CD8-positive, alpha-beta T cell (primary cell): ENCODE measurements at regions of chr11 and their contacts with region 1.

Region 1: DNA sequence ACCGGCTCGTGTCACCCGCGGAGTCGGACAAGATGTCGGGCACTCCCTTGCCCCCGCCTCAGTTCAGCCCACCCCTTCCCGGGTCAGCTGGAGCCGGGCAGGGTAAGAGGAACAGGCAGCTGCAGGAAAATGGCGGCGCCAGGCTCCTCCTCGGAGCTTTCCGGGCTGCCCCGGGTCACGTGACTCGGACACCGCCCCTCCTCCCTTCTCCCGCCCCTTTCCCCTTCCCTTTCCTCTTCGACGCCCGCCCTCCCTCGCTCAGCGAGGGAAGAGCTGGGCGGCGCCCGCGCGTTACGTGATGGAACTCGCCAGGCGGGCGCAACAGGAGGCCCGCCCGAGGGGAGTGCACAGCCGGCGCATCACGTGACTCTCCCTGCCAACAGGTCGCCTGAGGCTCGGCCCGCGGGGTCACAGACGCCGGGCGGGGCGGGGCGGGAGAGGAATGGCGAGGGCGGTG is at the start of gene PICALM:
- DNase-seq: peak; percentile 91 to 99 (median 96)
- ATAC-seq: peak; percentile 91
- H3K4me3 ChIP-seq: peak within 1 kb of the TSS; percentile 94
- H3K4me3 Mint-ChIP-seq: peak within 1 kb of the TSS; percentile 100
- H3K27ac ChIP-seq: peak within 1 kb of the TSS; percentile 67 to 93
- H3K27ac Mint-ChIP-seq: peak within 1 kb of the TSS; percentile 97
- H3K4me1 ChIP-seq: peaks cover 24% of the 10 kb centered on the region
- H3K4me1 Mint-ChIP-seq: peaks cover 34% of the 10 kb centered on the region
- H3K27me3 ChIP-seq: no peaks in the 10 kb centered on the region
- H3K27me3 Mint-ChIP-seq: no peaks in the 10 kb centered on the region
- CTCF ChIP-seq: no peak
- total RNA-seq, gene PICALM: 79.8 to 80.0 TPM

Region 2: DNA sequence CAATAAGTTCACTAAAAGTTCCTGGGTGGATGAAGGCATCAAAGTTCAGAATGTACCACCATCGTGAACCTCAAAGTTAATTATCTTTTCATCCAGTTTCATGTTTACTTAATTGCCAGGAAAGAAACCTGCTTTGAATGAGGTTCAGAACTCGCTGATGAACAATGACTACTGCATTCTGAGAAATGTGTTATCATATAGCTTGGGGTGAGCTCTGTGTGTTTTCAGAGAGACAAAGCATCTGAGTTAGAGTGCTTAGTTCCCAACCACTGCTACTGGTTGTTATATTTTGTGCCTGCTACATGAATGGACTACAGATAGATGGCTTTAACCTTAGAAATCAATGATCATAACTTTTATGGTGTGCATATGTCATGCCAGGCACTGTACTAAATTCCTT is 1572.9 kb before region 1 on chr11:
- CTCF ChIA-PET with region 1: no interaction called
- POLR2A ChIA-PET with region 1: no interaction called
- intact Hi-C with region 1: no loop called
- DNase-seq: no peak
- ATAC-seq: no peak
- H3K4me3 ChIP-seq: no peak overlapping the region
- H3K4me3 Mint-ChIP-seq: no peak overlapping the region
- H3K27ac ChIP-seq: no peak overlapping the region
- H3K27ac Mint-ChIP-seq: no peak overlapping the region
- H3K4me1 ChIP-seq: no peaks in the 10 kb centered on the region
- H3K4me1 Mint-ChIP-seq: no peaks in the 10 kb centered on the region
- H3K27me3 ChIP-seq: no peaks in the 10 kb centered on the region
- H3K27me3 Mint-ChIP-seq: no peaks in the 10 kb centered on the region
- CTCF ChIP-seq: no peak

Region 3: DNA sequence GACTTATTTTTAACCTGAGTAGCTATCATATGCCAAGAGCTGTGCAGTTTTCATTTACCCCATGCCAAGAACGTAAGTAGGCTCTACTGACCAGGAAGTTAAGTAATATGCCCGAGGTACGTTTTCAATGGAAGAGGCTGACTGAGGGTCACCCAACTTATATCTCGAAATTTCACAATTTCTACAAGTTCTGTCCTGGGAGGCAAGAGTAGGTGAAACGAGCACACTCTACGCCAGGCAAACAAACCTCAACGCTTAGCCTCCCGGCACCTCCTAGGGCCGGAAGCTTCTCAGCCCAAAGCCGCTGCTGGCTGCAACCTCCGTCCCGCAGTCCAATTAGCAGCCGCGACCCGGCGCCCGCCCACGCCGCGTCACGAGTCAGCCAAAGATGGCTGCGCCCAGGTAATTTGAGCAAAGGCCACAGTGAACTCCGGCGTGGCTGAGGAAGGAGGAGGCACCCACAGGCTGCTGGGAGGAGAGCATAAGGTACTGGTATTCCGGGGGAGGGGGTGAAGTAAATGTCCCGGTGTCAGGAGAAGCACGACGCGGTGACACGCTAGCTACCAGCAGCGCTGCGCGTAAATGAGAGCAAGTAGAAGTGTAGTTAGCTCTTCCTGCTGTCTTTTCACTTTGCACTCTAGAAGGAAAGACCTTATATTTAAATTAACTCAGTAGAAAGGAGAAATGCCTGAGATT is 421.2 kb before region 1 on chr11 and contains the start of gene TMEM126A:
- CTCF ChIA-PET with region 1: no interaction called
- POLR2A ChIA-PET with region 1: interaction called, 6 read pairs
- intact Hi-C with region 1: loop called in 1 of 2 experiments (anchors 1 kb)
- DNase-seq: peak; percentile 77 to 94 (median 90)
- ATAC-seq: peak; percentile 98
- H3K4me3 ChIP-seq: peak within 1 kb of the TSS; percentile 82 to 92
- H3K4me3 Mint-ChIP-seq: peak within 1 kb of the TSS; percentile 92
- H3K27ac ChIP-seq: peak within 1 kb of the TSS; percentile 75 to 90
- H3K27ac Mint-ChIP-seq: peak within 1 kb of the TSS; percentile 96
- H3K4me1 ChIP-seq: peaks cover 18% of the 10 kb centered on the region
- H3K4me1 Mint-ChIP-seq: peaks cover 39% of the 10 kb centered on the region
- H3K27me3 ChIP-seq: no peaks in the 10 kb centered on the region
- H3K27me3 Mint-ChIP-seq: peaks cover 17% of the 10 kb centered on the region
- CTCF ChIP-seq: no peak
- total RNA-seq, gene TMEM126A: 23.3 to 26.8 TPM

Region 4: GRCh38 chr11:85752890-85753581 is 315.9 kb before region 1 on chr11:
- CTCF ChIA-PET with region 1: no interaction called
- POLR2A ChIA-PET with region 1: interaction called, 6 read pairs
- intact Hi-C with region 1: loop called (anchors 5 kb)
- DNase-seq: peak; percentile 73 to 99 (median 87)
- ATAC-seq: peak; percentile 80
- H3K4me3 ChIP-seq: peak overlapping the region in 1 of 2 experiments; percentile 9
- H3K4me3 Mint-ChIP-seq: peak overlapping the region; percentile 74
- H3K27ac ChIP-seq: peak overlapping the region; percentile 47 to 83
- H3K27ac Mint-ChIP-seq: peak overlapping the region; percentile 95
- H3K4me1 ChIP-seq: peaks cover 84% of the 10 kb centered on the region
- H3K4me1 Mint-ChIP-seq: peaks cover 93% of the 10 kb centered on the region
- H3K27me3 ChIP-seq: no peaks in the 10 kb centered on the region
- H3K27me3 Mint-ChIP-seq: no peaks in the 10 kb centered on the region
- CTCF ChIP-seq: no peak

Region 5: DNA sequence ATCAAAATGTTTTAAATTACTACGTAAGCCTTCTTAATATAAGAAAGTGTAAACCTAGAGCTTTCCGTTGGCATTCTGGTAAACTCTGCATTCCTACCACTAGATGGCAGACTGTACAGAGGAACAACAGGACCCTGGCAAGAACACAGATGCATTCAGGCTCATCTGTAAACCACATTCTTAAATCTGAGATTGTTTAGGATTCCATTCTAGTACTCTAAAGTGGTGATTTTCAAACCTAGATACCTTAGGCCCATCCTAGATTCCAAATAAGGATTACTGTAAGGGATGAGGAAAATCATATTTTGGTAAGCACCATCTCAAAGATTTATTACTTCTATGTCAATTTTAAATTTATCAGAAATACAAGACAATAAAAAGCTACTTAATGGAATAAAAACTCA is 27.0 kb before region 1 on chr11:
- CTCF ChIA-PET with region 1: interaction called, 12 read pairs
- POLR2A ChIA-PET with region 1: interaction called, 13 read pairs
- intact Hi-C with region 1: loop called (anchors 1 to 2 kb)
- DNase-seq: peak in 6 of 9 experiments; percentile 30 to 89 (median 43)
- ATAC-seq: peak; percentile 94
- H3K4me3 ChIP-seq: no peak overlapping the region
- H3K4me3 Mint-ChIP-seq: no peak overlapping the region
- H3K27ac ChIP-seq: peak overlapping the region in 1 of 2 experiments; percentile 47
- H3K27ac Mint-ChIP-seq: peak overlapping the region; percentile 66
- H3K4me1 ChIP-seq: peaks cover 46% of the 10 kb centered on the region
- H3K4me1 Mint-ChIP-seq: peaks cover 65% of the 10 kb centered on the region
- H3K27me3 ChIP-seq: no peaks in the 10 kb centered on the region
- H3K27me3 Mint-ChIP-seq: no peaks in the 10 kb centered on the region
- CTCF ChIP-seq: peak; percentile 67

Region 6: GRCh38 chr11:86138958-86139357 is 70.0 kb after region 1 on chr11:
- CTCF ChIA-PET with region 1: no interaction called
- POLR2A ChIA-PET with region 1: interaction called, 3 read pairs
- intact Hi-C with region 1: loop called in 1 of 2 experiments (anchors 10 kb)
- DNase-seq: peak in 5 of 9 experiments; percentile 16 to 67 (median 47)
- ATAC-seq: peak; percentile 42
- H3K4me3 ChIP-seq: peak overlapping the region in 1 of 2 experiments; percentile 6
- H3K4me3 Mint-ChIP-seq: peak overlapping the region; percentile 68
- H3K27ac ChIP-seq: peak overlapping the region; percentile 27 to 65
- H3K27ac Mint-ChIP-seq: peak overlapping the region; percentile 91
- H3K4me1 ChIP-seq: peaks cover 26% of the 10 kb centered on the region
- H3K4me1 Mint-ChIP-seq: peaks cover 44% of the 10 kb centered on the region
- H3K27me3 ChIP-seq: no peaks in the 10 kb centered on the region
- H3K27me3 Mint-ChIP-seq: no peaks in the 10 kb centered on the region
- CTCF ChIP-seq: no peak

Region 7: DNA sequence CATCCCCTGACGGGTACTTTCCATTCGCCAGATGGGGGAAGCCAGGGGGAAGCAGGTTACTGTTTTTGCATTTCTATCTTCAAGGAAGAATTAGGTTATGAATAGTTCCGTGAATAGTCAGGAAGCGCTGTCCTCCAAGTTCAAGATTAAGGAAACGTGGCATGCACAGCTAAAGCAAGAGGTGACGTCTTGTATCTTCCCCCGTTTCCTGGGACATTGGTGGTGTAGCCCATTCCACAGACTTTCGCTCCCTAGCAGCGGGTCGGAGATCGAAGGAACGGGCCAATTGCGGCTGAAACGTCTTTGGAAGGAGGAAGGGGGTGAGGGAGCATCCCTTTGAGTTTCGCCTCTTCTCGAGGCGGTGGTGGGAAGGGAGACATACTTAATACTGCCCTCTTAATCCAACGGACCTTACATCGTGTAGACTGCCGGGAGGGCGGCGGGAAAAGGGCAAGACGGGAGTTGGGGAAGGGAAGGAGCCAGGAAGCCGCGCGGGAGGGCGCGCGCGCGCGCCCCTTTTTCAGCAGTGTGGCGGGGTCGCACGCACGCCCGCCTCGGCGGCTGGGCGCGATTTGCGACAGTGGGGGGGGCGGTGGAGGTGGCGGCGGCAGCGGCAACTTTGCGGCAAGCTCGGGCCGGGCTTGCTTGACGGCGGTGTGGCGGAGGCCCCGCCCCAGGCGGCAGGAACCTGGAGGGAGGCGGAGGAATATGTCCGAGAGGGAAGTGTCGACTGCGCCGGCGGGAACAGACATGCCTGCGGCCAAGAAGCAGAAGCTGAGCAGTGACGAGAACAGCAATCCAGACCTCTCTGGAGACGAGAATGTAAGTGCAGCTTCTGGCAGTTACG is 175.8 kb after region 1 on chr11 and contains the start of gene EED:
- CTCF ChIA-PET with region 1: no interaction called
- POLR2A ChIA-PET with region 1: interaction called, 11 read pairs
- intact Hi-C with region 1: loop called (anchors 1 kb)
- DNase-seq: peak; percentile 88 to 97 (median 94)
- ATAC-seq: peak; percentile 85
- H3K4me3 ChIP-seq: peak within 1 kb of the TSS; percentile 100
- H3K4me3 Mint-ChIP-seq: no peak within 1 kb of the TSS
- H3K27ac ChIP-seq: peak within 1 kb of the TSS; percentile 97 to 99
- H3K27ac Mint-ChIP-seq: no peak within 1 kb of the TSS
- H3K4me1 ChIP-seq: peaks cover 25% of the 10 kb centered on the region
- H3K4me1 Mint-ChIP-seq: peaks cover 27% of the 10 kb centered on the region
- H3K27me3 ChIP-seq: no peaks in the 10 kb centered on the region
- H3K27me3 Mint-ChIP-seq: no peaks in the 10 kb centered on the region
- CTCF ChIP-seq: no peak
- total RNA-seq, gene EED: 23.5 to 24.7 TPM

Region 8: GRCh38 chr11:86761978-86762377 is 693.0 kb after region 1 on chr11:
- CTCF ChIA-PET with region 1: no interaction called
- POLR2A ChIA-PET with region 1: no interaction called
- intact Hi-C with region 1: no loop called
- DNase-seq: no peak
- ATAC-seq: no peak
- H3K4me3 ChIP-seq: no peak overlapping the region
- H3K4me3 Mint-ChIP-seq: no peak overlapping the region
- H3K27ac ChIP-seq: no peak overlapping the region
- H3K27ac Mint-ChIP-seq: no peak overlapping the region
- H3K4me1 ChIP-seq: no peaks in the 10 kb centered on the region
- H3K4me1 Mint-ChIP-seq: no peaks in the 10 kb centered on the region
- H3K27me3 ChIP-seq: no peaks in the 10 kb centered on the region
- H3K27me3 Mint-ChIP-seq: peaks cover 3% of the 10 kb centered on the region
- CTCF ChIP-seq: no peak

Region 9: DNA sequence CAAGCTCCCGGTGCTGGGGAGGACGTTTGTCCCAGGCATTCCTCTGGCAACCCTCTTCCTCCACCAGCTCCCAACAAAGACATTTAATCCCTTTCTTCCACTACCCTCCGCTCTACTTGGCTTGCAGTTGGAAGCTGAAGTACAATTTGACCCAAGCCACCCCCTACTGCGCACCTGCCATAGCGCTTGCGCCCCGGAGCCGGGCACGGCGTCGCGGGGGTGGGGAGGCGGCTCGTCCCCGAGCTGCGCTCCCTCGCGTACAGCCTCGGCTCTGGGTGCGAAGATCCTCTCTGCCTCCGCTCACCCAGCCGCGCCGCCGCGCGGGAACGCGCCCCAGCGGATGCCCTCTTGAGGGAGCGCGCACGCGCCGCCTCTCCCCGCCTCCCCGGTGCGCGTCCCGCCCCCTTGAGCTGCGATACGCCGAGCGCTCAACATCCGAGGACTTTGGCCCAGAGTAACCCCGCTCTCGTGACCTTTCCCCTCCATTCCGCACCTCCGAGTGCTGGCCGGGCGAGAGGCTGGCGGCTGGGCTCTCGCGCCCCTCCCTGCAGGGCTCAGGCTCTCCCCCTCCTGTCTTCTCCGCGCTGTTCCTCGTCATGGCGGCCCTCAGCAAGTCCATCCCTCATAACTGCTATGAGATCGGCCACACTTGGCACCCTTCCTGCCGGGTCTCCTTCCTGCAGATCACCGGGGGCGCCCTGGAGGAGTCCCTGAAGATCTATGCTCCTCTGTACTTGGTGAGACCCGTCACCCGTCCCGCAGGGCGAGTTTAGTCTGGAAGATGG is 968.7 kb after region 1 on chr11 and contains the start of gene TMEM135:
- CTCF ChIA-PET with region 1: no interaction called
- POLR2A ChIA-PET with region 1: no interaction called
- intact Hi-C with region 1: loop called in 1 of 2 experiments (anchors 10 kb)
- DNase-seq: peak; percentile 83 to 96 (median 90)
- ATAC-seq: peak; percentile 94
- H3K4me3 ChIP-seq: peak within 1 kb of the TSS; percentile 85 to 93
- H3K4me3 Mint-ChIP-seq: peak within 1 kb of the TSS; percentile 99
- H3K27ac ChIP-seq: peak within 1 kb of the TSS; percentile 67 to 88
- H3K27ac Mint-ChIP-seq: peak within 1 kb of the TSS; percentile 96
- H3K4me1 ChIP-seq: peaks cover 20% of the 10 kb centered on the region
- H3K4me1 Mint-ChIP-seq: peaks cover 51% of the 10 kb centered on the region
- H3K27me3 ChIP-seq: no peaks in the 10 kb centered on the region
- H3K27me3 Mint-ChIP-seq: no peaks in the 10 kb centered on the region
- CTCF ChIP-seq: no peak
- total RNA-seq, gene TMEM135: 11.0 to 13.7 TPM